Right ventricle myocardium superior (tissue), 1 donor: ENCODE measurements at regions of chr4 and their contacts with region 1.

Region 1: GRCh38 chr4:88514557-88515511 is 8.7 kb downstream of the PYURF start:
- DNase-seq: no peak
- ATAC-seq: no peak

Region 2: GRCh38 chr4:88033309-88033708 is 481.5 kb before region 1 on chr4:
- intact Hi-C with region 1: loop called (anchors 10 kb)
- DNase-seq: no peak
- ATAC-seq: peak; percentile 63

Region 3: DNA sequence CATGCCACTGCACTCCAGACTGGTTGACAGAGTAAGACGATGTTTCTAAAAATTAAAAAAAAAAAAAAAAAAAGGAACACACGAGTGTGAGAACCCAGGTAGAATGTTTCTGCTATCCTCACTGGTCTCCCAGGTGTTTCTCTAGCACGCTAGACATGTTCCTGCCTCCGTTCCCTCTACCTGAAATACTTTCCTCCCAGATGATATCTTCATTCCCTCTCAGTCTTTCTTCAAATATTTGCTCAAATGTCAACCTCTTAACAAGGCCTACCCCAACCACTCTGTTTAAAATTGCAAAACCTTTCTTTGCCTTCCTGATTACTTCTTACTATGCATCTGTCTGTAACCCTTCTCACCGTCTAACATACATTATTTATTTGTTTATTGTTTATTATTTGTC is 296.9 kb before region 1 on chr4:
- intact Hi-C with region 1: loop called (anchors 2 kb)
- DNase-seq: no peak
- ATAC-seq: no peak

Region 4: GRCh38 chr4:88356771-88357170 is 158.1 kb before region 1 on chr4:
- intact Hi-C with region 1: no loop called
- DNase-seq: no peak
- ATAC-seq: no peak

Region 5: GRCh38 chr4:88737307-88737941 is 222.6 kb after region 1 on chr4:
- intact Hi-C with region 1: no loop called
- DNase-seq: no peak
- ATAC-seq: no peak